ENCODE measurements at regions of chr12 and their contacts with region 1.

Region 1: DNA sequence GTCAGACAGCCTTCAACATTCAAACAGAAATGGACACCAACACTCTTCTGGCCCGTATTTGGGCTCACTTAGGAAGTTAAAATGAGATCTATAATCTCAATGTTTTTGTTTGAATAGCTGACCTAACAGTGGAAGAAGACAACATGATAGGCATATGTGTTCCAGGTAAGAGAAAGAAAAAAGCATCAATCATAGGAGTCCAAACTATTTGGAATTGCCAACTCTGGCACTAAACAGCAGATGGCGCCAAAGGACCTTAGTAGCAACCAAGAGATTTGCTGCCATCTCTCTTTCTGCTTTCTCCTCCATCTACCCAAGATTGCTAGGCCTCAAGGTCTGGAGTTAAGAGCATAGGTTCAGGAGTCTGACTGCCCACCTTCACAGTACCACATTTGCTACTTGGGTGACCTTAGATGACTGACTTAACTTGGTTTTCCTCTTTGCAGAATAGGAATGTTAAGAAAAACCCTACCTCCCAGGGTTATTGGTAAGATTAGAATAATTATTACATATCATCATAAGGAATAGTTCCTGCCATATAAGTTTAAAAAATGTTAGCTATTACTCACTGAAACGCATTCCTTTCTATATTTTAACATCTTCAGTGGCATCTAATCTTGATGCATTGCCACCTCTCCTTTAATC is 30.2 kb downstream of the PEX5 start:
- DNase-seq: peak in 3 of 4 donors; percentile 54 to 77 (median 60)
- ATAC-seq: peak; percentile 90
- H3K4me3 ChIP-seq: no peak overlapping the region
- H3K27ac ChIP-seq: no peak overlapping the region
- H3K4me1 ChIP-seq: no peaks in the 10 kb centered on the region
- H3K27me3 ChIP-seq: no peaks in the 10 kb centered on the region
- CTCF ChIP-seq: peak; percentile 74 to 78

Region 2: GRCh38 chr12:7079826-7080125 is 139.9 kb before region 1 on chr12:
- intact Hi-C with region 1: no loop called
- DNase-seq: no peak
- ATAC-seq: peak; percentile 81
- H3K4me3 ChIP-seq: no peak overlapping the region
- H3K27ac ChIP-seq: peak overlapping the region; percentile 55 to 74
- H3K4me1 ChIP-seq: peaks cover 6 to 16% of the 10 kb centered on the region in 2 donors
- H3K27me3 ChIP-seq: no peaks in the 10 kb centered on the region
- CTCF ChIP-seq: no peak

Region 3: GRCh38 chr12:7450665-7451064 is 230.9 kb after region 1 on chr12:
- intact Hi-C with region 1: loop called in 1 of 2 experiments (anchors 10 kb)
- DNase-seq: no peak
- ATAC-seq: no peak
- H3K4me3 ChIP-seq: no peak overlapping the region
- H3K27ac ChIP-seq: no peak overlapping the region
- H3K4me1 ChIP-seq: no peaks in the 10 kb centered on the region
- H3K27me3 ChIP-seq: no peaks in the 10 kb centered on the region
- CTCF ChIP-seq: no peak

Region 4: GRCh38 chr12:7460375-7461259 is 240.9 kb after region 1 on chr12:
- intact Hi-C with region 1: loop called (anchors 5 to 10 kb)
- DNase-seq: peak in 2 of 4 donors; percentile 17 to 41
- ATAC-seq: peak; percentile 98
- H3K4me3 ChIP-seq: no peak overlapping the region
- H3K27ac ChIP-seq: no peak overlapping the region
- H3K4me1 ChIP-seq: no peaks in the 10 kb centered on the region
- H3K27me3 ChIP-seq: no peaks in the 10 kb centered on the region
- CTCF ChIP-seq: peak; percentile 82 to 84

Region 5: DNA sequence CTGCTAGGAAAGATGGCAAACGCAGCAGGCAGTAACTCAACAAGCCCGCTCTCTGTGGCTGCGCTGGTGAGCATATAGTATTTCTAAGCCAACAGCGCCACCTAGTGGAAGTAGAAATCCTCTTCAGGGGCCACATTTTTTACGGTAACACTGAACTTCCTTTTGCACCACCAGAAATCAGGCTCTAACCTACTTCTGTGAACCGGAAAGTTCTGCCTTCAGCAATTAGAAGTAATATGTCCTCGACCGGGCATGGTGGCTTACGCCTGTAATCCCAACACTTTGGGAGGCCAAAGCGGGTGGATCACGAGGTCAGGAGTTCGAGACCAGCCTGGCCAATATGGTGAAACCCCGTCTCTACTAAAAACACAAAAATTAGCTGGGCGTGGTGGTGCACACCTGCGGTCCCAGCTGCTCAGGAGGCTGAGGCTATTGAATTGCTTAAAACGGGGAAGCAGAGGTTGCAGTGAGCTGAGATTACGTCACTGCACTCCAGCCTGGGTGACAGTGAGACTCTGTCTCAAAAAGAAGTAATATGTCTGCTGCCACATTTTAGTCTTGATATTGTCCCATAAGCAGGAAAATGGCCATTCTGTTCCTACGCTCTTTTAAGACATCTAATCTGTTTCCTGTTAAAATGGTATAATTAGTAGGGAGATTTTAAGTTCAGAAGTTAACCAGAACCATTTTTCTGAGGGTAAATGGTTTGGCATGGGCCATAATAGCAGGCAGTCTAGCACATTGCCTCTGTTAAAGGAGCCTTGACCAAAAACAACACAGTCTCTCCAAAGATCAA is 419.2 kb after region 1 on chr12:
- intact Hi-C with region 1: loop called in 1 of 2 experiments (anchors 5 kb)
- DNase-seq: peak in 3 of 4 donors; percentile 77 to 90 (median 85)
- ATAC-seq: peak; percentile 99
- H3K4me3 ChIP-seq: peak overlapping the region in 1 of 2 donors; percentile 24
- H3K27ac ChIP-seq: peak overlapping the region in 1 of 2 donors; percentile 48
- H3K4me1 ChIP-seq: peaks cover 0 to 16% of the 10 kb centered on the region in 2 donors
- H3K27me3 ChIP-seq: peaks cover 4 to 31% of the 10 kb centered on the region in 2 donors
- CTCF ChIP-seq: peak; percentile 81 to 95

Region 6: GRCh38 chr12:7693793-7694192 is 474.1 kb after region 1 on chr12:
- intact Hi-C with region 1: no loop called
- DNase-seq: no peak
- ATAC-seq: peak; percentile 38
- H3K4me3 ChIP-seq: no peak overlapping the region
- H3K27ac ChIP-seq: no peak overlapping the region
- H3K4me1 ChIP-seq: peaks cover 6 to 13% of the 10 kb centered on the region in 2 donors
- H3K27me3 ChIP-seq: no peaks in the 10 kb centered on the region
- CTCF ChIP-seq: no peak